ENCODE measurements at regions of chr9 and their contacts with region 1.

Region 1: GRCh38 chr9:34500623-34501267 is 22.0 kb downstream of the ENHO start:
- DNase-seq: peak; percentile 64
- H3K4me3 ChIP-seq: no peak overlapping the region
- H3K27ac ChIP-seq: no peak overlapping the region
- H3K4me1 ChIP-seq: peaks cover 29% of the 10 kb centered on the region
- H3K27me3 ChIP-seq: no peaks in the 10 kb centered on the region
- CTCF ChIP-seq: peak; percentile 98

Region 2: GRCh38 chr9:34376596-34377403 is 123.9 kb before region 1 on chr9 and contains the start of gene MYORG:
- CTCF ChIA-PET with region 1: interaction called, 3 read pairs
- dilution Hi-C with region 1: no loop called
- in situ Hi-C with region 1: no loop called
- intact Hi-C with region 1: loop called (anchors 1 kb)
- DNase-seq: peak; percentile 98
- H3K4me3 ChIP-seq: peak within 1 kb of the TSS; percentile 73 to 85 (median 84)
- H3K27ac ChIP-seq: peak within 1 kb of the TSS; percentile 42
- H3K4me1 ChIP-seq: peaks cover 39% of the 10 kb centered on the region
- H3K27me3 ChIP-seq: no peaks in the 10 kb centered on the region
- CTCF ChIP-seq: no peak
- total RNA-seq, gene MYORG: 23.8 to 35.0 TPM

Region 3: GRCh38 chr9:34428325-34428958 is 72.3 kb before region 1 on chr9:
- CTCF ChIA-PET with region 1: no interaction called
- dilution Hi-C with region 1: loop called (anchors 5 kb)
- in situ Hi-C with region 1: no loop called
- intact Hi-C with region 1: no loop called
- DNase-seq: no peak
- H3K4me3 ChIP-seq: no peak overlapping the region
- H3K27ac ChIP-seq: no peak overlapping the region
- H3K4me1 ChIP-seq: no peaks in the 10 kb centered on the region
- H3K27me3 ChIP-seq: no peaks in the 10 kb centered on the region
- CTCF ChIP-seq: no peak

Region 4: DNA sequence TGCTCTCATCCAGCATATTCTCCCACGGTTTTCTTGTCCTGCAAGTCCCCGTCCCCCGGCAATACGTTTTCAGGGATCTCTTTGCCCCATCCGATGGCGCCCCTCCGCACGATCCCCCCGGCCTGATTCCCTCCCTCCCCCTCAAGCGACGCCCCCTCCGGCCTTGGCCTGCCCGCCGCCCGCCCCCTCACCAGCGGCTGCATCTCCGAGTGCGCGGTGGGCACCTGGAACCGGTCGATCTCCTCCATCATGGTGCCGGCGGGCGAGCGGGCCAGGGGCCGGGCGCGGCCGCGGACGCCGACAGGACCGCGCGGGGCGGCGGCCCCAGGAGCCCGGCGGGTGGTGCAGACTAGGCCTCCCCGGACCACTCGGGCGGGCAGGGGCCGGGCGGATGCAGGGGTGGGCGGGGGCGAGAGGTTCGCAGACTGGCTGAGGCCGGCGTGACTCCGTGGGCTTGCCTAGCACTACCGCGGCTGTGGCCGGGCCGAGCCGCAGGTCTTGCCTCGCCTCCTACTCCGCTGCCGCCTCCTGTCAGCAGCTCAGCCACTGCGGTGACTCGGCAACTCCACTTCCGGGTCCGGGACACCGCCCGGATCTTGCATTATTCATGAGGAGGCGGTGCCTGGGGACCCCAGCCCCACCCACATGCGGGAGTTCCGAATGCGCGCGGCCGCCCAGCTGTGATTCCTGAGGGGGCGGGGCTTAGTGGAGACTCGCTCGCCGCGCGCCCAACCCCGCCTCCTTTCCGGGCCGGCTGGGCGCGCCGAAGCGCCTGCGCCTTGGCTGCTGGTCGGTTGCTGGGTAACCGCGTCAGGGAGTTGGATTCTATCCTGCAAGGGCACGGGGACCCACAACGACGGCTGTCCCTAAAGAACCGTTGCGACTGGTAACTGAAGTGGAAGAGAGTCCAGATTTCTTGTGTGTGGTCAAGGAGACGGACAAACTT is 42.5 kb before region 1 on chr9 and contains the starts of genes DNAI1 and FAM219A:
- CTCF ChIA-PET with region 1: no interaction called
- dilution Hi-C with region 1: no loop called
- in situ Hi-C with region 1: loop called in 1 of 2 experiments (anchors 5 kb)
- intact Hi-C with region 1: loop called (anchors 1 kb)
- DNase-seq: peak; percentile 98
- H3K4me3 ChIP-seq: peak within 1 kb of the TSS; percentile 64 to 86 (median 77)
- H3K27ac ChIP-seq: peak within 1 kb of the TSS; percentile 73
- H3K4me1 ChIP-seq: peaks cover 36% of the 10 kb centered on the region
- H3K27me3 ChIP-seq: no peaks in the 10 kb centered on the region
- CTCF ChIP-seq: no peak
- total RNA-seq, gene DNAI1: not detected
- total RNA-seq, gene FAM219A: 12.3 to 27.4 TPM

Region 5: DNA sequence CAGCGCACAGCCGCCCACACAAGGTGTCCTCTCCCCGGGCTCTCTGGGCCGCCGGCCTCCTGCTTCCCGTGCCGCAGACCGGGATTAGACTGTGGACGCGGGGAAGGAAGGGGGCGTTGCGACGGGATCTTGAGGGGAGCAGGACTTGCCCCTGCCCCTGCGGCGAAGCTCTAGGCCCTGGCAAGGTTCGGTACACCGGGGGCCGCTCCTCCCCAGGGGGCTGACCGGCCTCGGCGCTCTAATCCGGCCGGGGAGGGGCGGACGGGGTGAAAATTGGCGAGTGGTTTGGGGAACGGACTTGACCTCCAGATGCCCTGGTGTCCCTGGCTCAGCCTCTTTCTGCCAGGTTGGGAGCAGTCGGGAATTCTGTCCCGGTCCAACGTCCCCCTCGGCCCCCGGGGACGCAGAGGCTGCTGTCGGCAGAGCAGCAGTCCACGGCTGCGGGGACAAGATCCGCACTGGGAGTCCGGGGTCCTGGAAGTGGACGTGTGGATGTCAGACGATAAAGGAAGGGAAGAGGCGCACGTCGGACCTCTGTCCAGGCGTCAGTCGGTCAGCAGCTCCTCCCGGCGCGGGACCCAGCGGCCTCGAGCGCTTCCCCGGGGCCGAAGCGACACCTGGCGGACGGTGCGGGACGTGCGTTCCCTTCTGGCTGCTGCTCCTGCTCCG is 90.6 kb after region 1 on chr9:
- CTCF ChIA-PET with region 1: interaction called, 7 read pairs
- dilution Hi-C with region 1: no loop called
- in situ Hi-C with region 1: no loop called
- intact Hi-C with region 1: loop called (anchors 2 kb)
- DNase-seq: peak; percentile 57
- H3K4me3 ChIP-seq: no peak overlapping the region
- H3K27ac ChIP-seq: no peak overlapping the region
- H3K4me1 ChIP-seq: peaks cover 14% of the 10 kb centered on the region
- H3K27me3 ChIP-seq: peaks cover 42% of the 10 kb centered on the region
- CTCF ChIP-seq: peak; percentile 79 to 89

Region 6: GRCh38 chr9:34611829-34612630 is 111.3 kb after region 1 on chr9 and contains the start of gene RPP25L:
- CTCF ChIA-PET with region 1: no interaction called
- dilution Hi-C with region 1: loop called (anchors 10 kb)
- in situ Hi-C with region 1: no loop called
- intact Hi-C with region 1: no loop called
- DNase-seq: peak; percentile 86
- H3K4me3 ChIP-seq: peak within 1 kb of the TSS; percentile 79 to 84 (median 82)
- H3K27ac ChIP-seq: peak within 1 kb of the TSS; percentile 82
- H3K4me1 ChIP-seq: peaks cover 20% of the 10 kb centered on the region
- H3K27me3 ChIP-seq: no peaks in the 10 kb centered on the region
- CTCF ChIP-seq: no peak
- total RNA-seq, gene RPP25L: 12.5 to 31.7 TPM